ENCODE measurements at regions of chr20 and their contacts with region 1.

Region 1: GRCh38 chr20:44310664-44311639 is at the start of gene FITM2:
- DNase-seq: peak; percentile 98
- ATAC-seq: peak; percentile 93
- H3K4me3 ChIP-seq: peak within 1 kb of the TSS; percentile 70 to 96 (median 78)
- H3K27ac ChIP-seq: peak within 1 kb of the TSS; percentile 37
- H3K4me1 ChIP-seq: peaks cover 27% of the 10 kb centered on the region
- H3K27me3 ChIP-seq: peaks cover 2 to 4% of the 10 kb centered on the region in 2 experiments; a peak in 1 of 5 replicates
- CTCF ChIP-seq: peak; percentile 100
- EP300 ChIP-seq: 0 out of 4 replicates have a peak, but pooled peaks of 1 of the 2 experiments have one; percentile 37
- POLR2A ChIP-seq: peak; percentile 75 to 97
- RAD21 ChIP-seq: peak; percentile 100
- total RNA-seq, gene FITM2: 13.6 and 24.5 TPM in 2 replicates

Region 2: GRCh38 chr20:44217342-44218092 is 93.4 kb before region 1 on chr20:
- CTCF ChIA-PET with region 1: interaction called, 77 read pairs
- POLR2A ChIA-PET with region 1: interaction called, 20 read pairs
- in situ Hi-C with region 1: loop called (anchors 5 kb)
- intact Hi-C with region 1: loop called (anchors 1 kb)
- DNase-seq: peak; percentile 82
- ATAC-seq: peak; percentile 84
- H3K4me3 ChIP-seq: no peak overlapping the region
- H3K27ac ChIP-seq: no peak overlapping the region
- H3K4me1 ChIP-seq: peaks cover 28% of the 10 kb centered on the region
- H3K27me3 ChIP-seq: no peaks in the 10 kb centered on the region
- CTCF ChIP-seq: peak; percentile 99
- EP300 ChIP-seq: no peak
- POLR2A ChIP-seq: no peak
- RAD21 ChIP-seq: peak; percentile 98

Region 3: GRCh38 chr20:44247586-44248409 is 63.2 kb before region 1 on chr20:
- CTCF ChIA-PET with region 1: interaction called, 20 read pairs
- POLR2A ChIA-PET with region 1: no interaction called
- in situ Hi-C with region 1: loop called (anchors 5 kb)
- intact Hi-C with region 1: no loop called
- DNase-seq: peak; percentile 80
- ATAC-seq: peak; percentile 99
- H3K4me3 ChIP-seq: no peak overlapping the region
- H3K27ac ChIP-seq: no peak overlapping the region
- H3K4me1 ChIP-seq: no peaks in the 10 kb centered on the region
- H3K27me3 ChIP-seq: no peaks in the 10 kb centered on the region; a peak in 2 of 5 replicates
- CTCF ChIP-seq: peak; percentile 87
- EP300 ChIP-seq: peak in 1 of 2 experiments; percentile 64; a peak in 1 of 4 replicates
- POLR2A ChIP-seq: no peak
- RAD21 ChIP-seq: peak; percentile 95

Region 4: GRCh38 chr20:44355498-44356352 is 44.8 kb after region 1 on chr20 and contains the start of gene HNF4A:
- CTCF ChIA-PET with region 1: no interaction called
- POLR2A ChIA-PET with region 1: interaction called, 10 read pairs
- in situ Hi-C with region 1: no loop called
- intact Hi-C with region 1: loop called (anchors 5 kb)
- DNase-seq: peak; percentile 92
- ATAC-seq: peak; percentile 91
- H3K4me3 ChIP-seq: peak within 1 kb of the TSS; percentile 69 to 95 (median 92)
- H3K27ac ChIP-seq: peak within 1 kb of the TSS; percentile 73
- H3K4me1 ChIP-seq: peaks cover 76% of the 10 kb centered on the region
- H3K27me3 ChIP-seq: no peaks in the 10 kb centered on the region; a peak in 1 of 5 replicates
- CTCF ChIP-seq: peak; percentile 9; the same call in 1 of the 2 replicates
- EP300 ChIP-seq: peak in 1 of 2 experiments; percentile 50; a peak in 1 of 4 replicates
- POLR2A ChIP-seq: peak; percentile 85 to 98
- RAD21 ChIP-seq: peak; percentile 66
- total RNA-seq, gene HNF4A: 169 and 190 TPM in 2 replicates

Region 5: GRCh38 chr20:44388466-44389023 is 77.6 kb after region 1 on chr20:
- CTCF ChIA-PET with region 1: interaction called, 3 read pairs
- POLR2A ChIA-PET with region 1: no interaction called
- in situ Hi-C with region 1: no loop called
- intact Hi-C with region 1: loop called (anchors 1 kb)
- DNase-seq: no peak
- ATAC-seq: peak; percentile 11
- H3K4me3 ChIP-seq: no peak overlapping the region
- H3K27ac ChIP-seq: no peak overlapping the region
- H3K4me1 ChIP-seq: peaks cover 72% of the 10 kb centered on the region
- H3K27me3 ChIP-seq: no peaks in the 10 kb centered on the region
- CTCF ChIP-seq: peak; percentile 75
- EP300 ChIP-seq: 0 out of 4 replicates have a peak, but pooled peaks of 1 of the 2 experiments have one; percentile 3
- POLR2A ChIP-seq: no peak
- RAD21 ChIP-seq: peak; percentile 80